ENCODE measurements at regions of chr5 and their contacts with region 1.

Region 1: GRCh38 chr5:1666812-1667588 is 132.6 kb downstream of the MRPL36 start:
- DNase-seq: no peak
- ATAC-seq: peak in 3 of 4 donors; percentile 46 to 67 (median 55)
- H3K4me3 ChIP-seq: peak overlapping the region; percentile 30
- H3K27ac ChIP-seq: no peak overlapping the region
- H3K4me1 ChIP-seq: no peaks in the 10 kb centered on the region
- H3K27me3 ChIP-seq: peaks cover 0 to 63% (median 24%) of the 10 kb centered on the region in 3 donors
- CTCF ChIP-seq: peak; percentile 17

Region 2: GRCh38 chr5:1343931-1344901 is 322.8 kb before region 1 on chr5:
- intact Hi-C with region 1: no loop called
- DNase-seq: no peak
- ATAC-seq: no peak
- H3K4me3 ChIP-seq: peak overlapping the region; percentile 97
- H3K27ac ChIP-seq: peak overlapping the region; percentile 62
- H3K4me1 ChIP-seq: peaks cover 18% of the 10 kb centered on the region
- H3K27me3 ChIP-seq: no peaks in the 10 kb centered on the region
- CTCF ChIP-seq: no peak

Region 3: GRCh38 chr5:2038321-2039179 is 371.6 kb after region 1 on chr5:
- intact Hi-C with region 1: loop called in 1 of 2 experiments (anchors 5 kb)
- DNase-seq: peak; percentile 69 to 80
- ATAC-seq: peak; percentile 78 to 93 (median 86)
- H3K4me3 ChIP-seq: peak overlapping the region; percentile 60
- H3K27ac ChIP-seq: no peak overlapping the region
- H3K4me1 ChIP-seq: no peaks in the 10 kb centered on the region
- H3K27me3 ChIP-seq: peaks cover 0 to 21% (median 0%) of the 10 kb centered on the region in 3 donors
- CTCF ChIP-seq: peak; percentile 62